ENCODE measurements at regions of chr1 and their contacts with region 1.

Region 1: DNA sequence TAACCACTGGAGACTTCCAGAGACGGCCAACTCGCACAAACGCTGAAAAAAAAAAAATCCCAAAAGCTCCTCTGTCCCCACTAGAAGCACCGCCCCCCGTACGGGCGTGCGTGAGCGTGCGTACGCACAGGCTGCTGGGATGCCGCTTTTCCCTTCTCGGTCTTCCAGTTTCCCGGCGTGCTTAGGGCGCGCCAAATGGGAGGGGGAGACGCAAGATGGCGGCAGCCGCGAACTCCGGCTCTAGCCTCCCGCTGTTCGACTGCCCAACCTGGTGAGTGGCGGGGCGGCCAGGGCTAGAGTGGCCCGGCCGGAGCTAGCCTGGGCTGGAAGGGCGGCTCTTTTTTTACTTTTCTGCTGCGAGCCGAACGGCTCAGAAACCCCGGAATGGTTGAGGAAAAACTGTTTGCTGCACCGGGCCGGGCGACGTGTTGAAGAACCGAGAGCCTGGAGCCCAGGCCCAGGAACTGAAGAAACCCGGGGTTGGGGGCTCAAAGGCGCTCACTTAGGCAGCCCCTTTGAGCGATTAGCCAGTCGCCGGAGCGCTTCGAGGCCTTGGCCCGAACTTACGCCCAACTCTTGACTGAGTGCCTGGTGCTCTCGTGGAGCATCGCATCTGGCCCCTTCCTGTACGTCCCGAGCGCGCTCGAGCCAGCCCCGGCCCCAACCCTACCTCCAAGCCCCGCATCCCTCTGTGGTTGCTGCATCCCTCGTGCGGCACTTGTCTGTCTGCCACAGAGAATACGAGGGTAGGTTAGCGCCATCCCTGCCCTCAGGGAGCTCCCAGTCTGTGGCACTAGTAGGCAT is at the start of gene PPP1R8:
- DNase-seq: peak; percentile 94
- H3K4me3 Mint-ChIP-seq: peak within 1 kb of the TSS; percentile 95
- H3K27ac Mint-ChIP-seq: peak within 1 kb of the TSS; percentile 87
- H3K4me1 Mint-ChIP-seq: peaks cover 39% of the 10 kb centered on the region
- H3K27me3 Mint-ChIP-seq: no peaks in the 10 kb centered on the region
- total RNA-seq, gene PPP1R8: 34.1 to 35.8 TPM

Region 2: DNA sequence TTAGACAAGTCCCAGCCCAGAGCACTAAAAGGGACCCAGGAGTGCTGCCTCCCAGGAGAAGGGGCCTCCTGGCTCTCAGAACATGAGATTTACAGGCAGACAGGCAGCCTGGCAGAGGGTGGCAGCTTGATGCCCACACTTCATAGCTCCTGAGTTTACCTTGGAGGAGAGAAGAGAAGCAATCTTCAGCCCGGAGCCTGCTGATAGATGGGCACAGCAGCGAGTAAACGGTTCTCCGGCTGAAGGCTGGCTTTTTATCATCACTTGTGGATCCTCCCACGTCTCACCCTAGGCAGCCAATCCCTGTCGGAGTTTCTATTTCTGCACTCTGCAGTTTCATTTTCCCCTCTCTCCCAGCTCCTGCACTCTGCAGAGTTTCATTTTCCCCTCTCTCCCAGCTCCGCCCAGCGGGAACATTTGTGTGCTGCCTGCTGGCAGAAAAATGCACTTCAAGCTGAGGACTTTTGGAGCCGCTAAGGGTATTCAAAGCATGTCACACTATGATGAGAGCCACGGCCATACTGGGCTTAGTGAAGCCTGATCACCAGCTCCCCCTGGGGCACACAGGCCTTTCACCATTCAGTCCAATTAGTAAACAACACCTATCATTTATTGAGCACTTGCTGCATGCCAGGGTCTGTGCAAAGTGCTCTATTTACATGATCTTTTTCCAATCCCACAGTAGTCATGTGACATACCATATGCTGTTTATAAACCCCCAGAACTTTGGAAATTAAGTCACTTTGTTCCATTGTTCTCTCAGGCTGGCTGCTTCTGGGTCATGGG is 158.7 kb before region 1 on chr1 and contains the start of gene IFI6:
- CTCF ChIA-PET with region 1: no interaction called
- intact Hi-C with region 1: loop called (anchors 1 kb)
- DNase-seq: peak; percentile 89
- H3K4me3 Mint-ChIP-seq: peak within 1 kb of the TSS; percentile 95
- H3K27ac Mint-ChIP-seq: peak within 1 kb of the TSS; percentile 91
- H3K4me1 Mint-ChIP-seq: peaks cover 30% of the 10 kb centered on the region
- H3K27me3 Mint-ChIP-seq: no peaks in the 10 kb centered on the region
- total RNA-seq, gene IFI6: 115 to 125 TPM

Region 3: GRCh38 chr1:27725374-27726173 is 105.2 kb before region 1 on chr1 and contains the start of gene FAM76A:
- CTCF ChIA-PET with region 1: interaction called, 3 read pairs
- intact Hi-C with region 1: loop called (anchors 1 kb)
- DNase-seq: peak; percentile 100
- H3K4me3 Mint-ChIP-seq: peak within 1 kb of the TSS; percentile 86
- H3K27ac Mint-ChIP-seq: peak within 1 kb of the TSS; percentile 80
- H3K4me1 Mint-ChIP-seq: peaks cover 12% of the 10 kb centered on the region
- H3K27me3 Mint-ChIP-seq: no peaks in the 10 kb centered on the region
- total RNA-seq, gene FAM76A: 8.4 to 9.7 TPM

Region 4: DNA sequence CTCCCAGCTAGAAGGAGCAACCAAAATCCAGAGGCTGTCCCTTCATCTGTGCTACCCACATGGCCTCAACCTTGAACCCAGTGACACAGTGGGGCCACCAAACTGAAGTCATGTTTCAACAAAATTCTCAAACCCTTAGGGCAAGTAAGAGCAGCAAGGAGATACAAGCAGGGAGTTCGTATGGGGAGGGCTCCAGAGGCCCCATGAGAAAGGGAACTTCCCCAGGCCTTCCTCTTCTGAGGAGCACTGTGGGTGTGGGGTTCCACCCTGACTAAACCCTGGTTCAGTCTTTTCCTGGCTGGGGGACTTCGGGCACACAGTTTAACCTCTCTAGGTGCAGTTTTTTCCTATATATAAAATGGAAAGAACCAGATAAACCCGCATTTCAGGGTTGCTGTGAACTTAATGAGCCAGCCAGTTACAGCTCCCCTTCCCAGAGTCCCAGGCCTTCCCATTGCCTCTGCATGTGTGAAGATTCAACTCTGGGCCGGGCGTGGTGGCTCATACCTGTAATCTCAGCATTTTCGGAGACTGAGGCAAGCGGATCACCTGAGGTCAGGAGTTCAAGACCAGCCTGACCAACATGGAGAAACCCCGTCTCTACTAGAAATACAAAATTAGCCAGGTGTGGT is 33.6 kb after region 1 on chr1:
- CTCF ChIA-PET with region 1: no interaction called
- intact Hi-C with region 1: loop called (anchors 2 kb)
- DNase-seq: peak; percentile 78
- H3K4me3 Mint-ChIP-seq: peak overlapping the region; percentile 43
- H3K27ac Mint-ChIP-seq: peak overlapping the region; percentile 93
- H3K4me1 Mint-ChIP-seq: peaks cover 44% of the 10 kb centered on the region
- H3K27me3 Mint-ChIP-seq: no peaks in the 10 kb centered on the region

Region 5: GRCh38 chr1:27872059-27872801 is 41.4 kb after region 1 on chr1 and contains the start of gene THEMIS2:
- CTCF ChIA-PET with region 1: no interaction called
- intact Hi-C with region 1: loop called (anchors 1 kb)
- DNase-seq: peak; percentile 81
- H3K4me3 Mint-ChIP-seq: peak within 1 kb of the TSS; percentile 86
- H3K27ac Mint-ChIP-seq: peak within 1 kb of the TSS; percentile 74
- H3K4me1 Mint-ChIP-seq: peaks cover 51% of the 10 kb centered on the region
- H3K27me3 Mint-ChIP-seq: no peaks in the 10 kb centered on the region
- total RNA-seq, gene THEMIS2: 12.9 to 17.5 TPM

Region 6: GRCh38 chr1:27894521-27894920 is 63.7 kb after region 1 on chr1:
- CTCF ChIA-PET with region 1: no interaction called
- intact Hi-C with region 1: no loop called
- DNase-seq: no peak
- H3K4me3 Mint-ChIP-seq: no peak overlapping the region
- H3K27ac Mint-ChIP-seq: peak overlapping the region; percentile 58
- H3K4me1 Mint-ChIP-seq: peaks cover 28% of the 10 kb centered on the region
- H3K27me3 Mint-ChIP-seq: no peaks in the 10 kb centered on the region

Region 7: GRCh38 chr1:28409090-28409489 is 578.3 kb after region 1 on chr1:
- CTCF ChIA-PET with region 1: no interaction called
- intact Hi-C with region 1: no loop called
- DNase-seq: no peak
- H3K4me3 Mint-ChIP-seq: no peak overlapping the region
- H3K27ac Mint-ChIP-seq: no peak overlapping the region
- H3K4me1 Mint-ChIP-seq: no peaks in the 10 kb centered on the region
- H3K27me3 Mint-ChIP-seq: no peaks in the 10 kb centered on the region

Measured in activated naive CD4-positive, alpha-beta T cell treated with anti-CD3 and anti-CD28 coated beads for 36 hours (primary cell).